Mammary epithelial cell (primary cell): ENCODE measurements at regions of chr12 and their contacts with region 1.

Region 1: GRCh38 chr12:120580787-120581723 is at the start of gene POP5:
- DNase-seq: peak; percentile 97
- H3K4me3 ChIP-seq: peak within 1 kb of the TSS; percentile 49 to 87 (median 81)
- H3K27ac ChIP-seq: peak within 1 kb of the TSS; percentile 10
- H3K4me1 ChIP-seq: peaks cover 16% of the 10 kb centered on the region
- H3K27me3 ChIP-seq: no peaks in the 10 kb centered on the region
- CTCF ChIP-seq: no peak
- total RNA-seq, gene POP5: 19.3 to 35.6 TPM

Region 2: DNA sequence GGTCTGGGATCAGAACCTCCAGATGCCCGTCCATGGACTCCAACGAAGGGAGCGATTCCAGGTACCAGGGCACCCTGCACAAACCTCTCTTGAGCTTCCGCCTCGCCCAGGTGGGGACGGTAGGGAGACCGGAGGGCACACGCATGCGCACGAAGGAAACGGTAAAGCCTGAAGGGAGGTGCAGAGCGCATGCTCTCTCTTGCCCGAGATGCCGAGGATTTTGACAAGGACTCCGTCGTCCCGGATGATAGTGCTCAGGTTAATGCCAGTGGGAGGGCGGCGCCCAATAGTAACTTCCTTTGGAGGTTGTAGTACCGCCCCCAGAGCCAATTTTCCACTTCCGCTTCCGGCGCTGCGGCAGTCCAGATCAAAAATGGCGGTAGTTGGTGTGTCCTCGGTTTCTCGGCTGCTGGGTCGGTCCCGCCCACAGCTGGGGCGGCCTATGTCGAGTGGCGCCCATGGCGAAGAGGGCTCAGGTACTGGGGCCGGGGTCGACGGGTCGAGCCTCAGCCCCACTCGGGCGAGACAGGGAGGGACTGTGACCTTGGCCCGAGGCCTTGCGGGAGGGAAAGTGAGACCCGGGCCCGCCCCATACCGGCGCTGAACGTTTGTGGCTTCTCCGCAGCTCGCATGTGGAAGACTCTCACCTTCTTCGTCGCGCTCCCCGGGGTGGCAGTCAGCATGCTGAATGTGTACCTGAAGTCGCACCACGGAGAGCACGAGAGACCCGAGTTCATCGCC is 143.1 kb before region 1 on chr12 and contains the start of gene COX6A1:
- CTCF ChIA-PET with region 1: no interaction called
- dilution Hi-C with region 1: no loop called
- in situ Hi-C with region 1: no loop called
- intact Hi-C with region 1: loop called (anchors 5 kb)
- DNase-seq: peak; percentile 98
- H3K4me3 ChIP-seq: peak within 1 kb of the TSS; percentile 47 to 99 (median 82)
- H3K27ac ChIP-seq: peak within 1 kb of the TSS; percentile 61
- H3K4me1 ChIP-seq: peaks cover 14% of the 10 kb centered on the region
- H3K27me3 ChIP-seq: no peaks in the 10 kb centered on the region
- CTCF ChIP-seq: peak in 1 of 2 donors; percentile 21
- total RNA-seq, gene COX6A1: 306 to 422 TPM

Region 3: GRCh38 chr12:120620624-120621023 is 39.6 kb after region 1 on chr12:
- CTCF ChIA-PET with region 1: no interaction called
- dilution Hi-C with region 1: no loop called
- in situ Hi-C with region 1: no loop called
- intact Hi-C with region 1: loop called (anchors 1 kb)
- DNase-seq: peak; percentile 89
- H3K4me3 ChIP-seq: no peak overlapping the region
- H3K27ac ChIP-seq: no peak overlapping the region
- H3K4me1 ChIP-seq: peaks cover 14% of the 10 kb centered on the region
- H3K27me3 ChIP-seq: no peaks in the 10 kb centered on the region
- CTCF ChIP-seq: no peak

Region 4: DNA sequence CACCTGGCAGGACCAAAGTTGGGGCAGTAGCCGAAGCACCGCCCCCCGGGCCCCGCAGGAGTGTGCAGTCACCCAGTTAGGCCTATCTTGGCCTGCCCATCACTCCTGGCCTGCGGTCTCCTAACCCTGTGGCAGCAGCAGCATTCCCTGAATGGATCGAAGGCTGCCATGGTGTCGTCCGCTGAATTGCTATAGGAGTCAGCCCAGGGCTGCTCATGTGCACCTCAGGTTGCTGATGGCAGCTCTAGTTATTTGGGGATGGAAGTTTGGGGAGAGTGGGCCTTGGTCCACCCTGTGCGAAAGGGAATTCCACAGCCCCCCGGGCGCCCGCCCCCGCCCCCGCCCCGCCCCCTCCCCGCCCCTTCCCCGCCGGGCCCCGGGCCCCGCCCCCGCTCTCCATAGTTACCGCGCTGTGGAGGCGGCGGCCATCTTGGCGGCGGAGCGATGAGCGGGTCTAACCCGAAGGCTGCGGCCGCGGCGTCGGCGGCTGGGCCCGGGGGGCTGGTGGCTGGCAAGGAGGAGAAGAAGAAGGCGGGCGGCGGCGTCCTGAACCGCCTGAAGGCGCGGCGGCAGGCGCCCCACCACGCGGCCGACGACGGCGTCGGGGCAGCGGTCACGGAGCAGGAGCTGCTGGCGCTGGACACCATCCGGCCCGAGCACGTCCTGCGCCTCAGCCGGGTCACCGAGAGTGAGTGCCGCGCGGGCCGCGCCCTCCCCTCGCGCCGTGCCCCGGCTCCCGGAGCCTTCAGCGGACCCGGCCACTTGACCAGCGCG is 129.2 kb after region 1 on chr12 and contains the start of gene UNC119B:
- CTCF ChIA-PET with region 1: no interaction called
- dilution Hi-C with region 1: loop called (anchors 5 kb)
- in situ Hi-C with region 1: loop called (anchors 5 to 10 kb)
- intact Hi-C with region 1: no loop called
- DNase-seq: peak; percentile 50
- H3K4me3 ChIP-seq: peak within 1 kb of the TSS; percentile 81 to 97 (median 93)
- H3K27ac ChIP-seq: peak within 1 kb of the TSS; percentile 84
- H3K4me1 ChIP-seq: peaks cover 15% of the 10 kb centered on the region
- H3K27me3 ChIP-seq: peaks cover 1% of the 10 kb centered on the region
- CTCF ChIP-seq: no peak
- total RNA-seq, gene UNC119B: 28.0 to 33.3 TPM

Region 5: DNA sequence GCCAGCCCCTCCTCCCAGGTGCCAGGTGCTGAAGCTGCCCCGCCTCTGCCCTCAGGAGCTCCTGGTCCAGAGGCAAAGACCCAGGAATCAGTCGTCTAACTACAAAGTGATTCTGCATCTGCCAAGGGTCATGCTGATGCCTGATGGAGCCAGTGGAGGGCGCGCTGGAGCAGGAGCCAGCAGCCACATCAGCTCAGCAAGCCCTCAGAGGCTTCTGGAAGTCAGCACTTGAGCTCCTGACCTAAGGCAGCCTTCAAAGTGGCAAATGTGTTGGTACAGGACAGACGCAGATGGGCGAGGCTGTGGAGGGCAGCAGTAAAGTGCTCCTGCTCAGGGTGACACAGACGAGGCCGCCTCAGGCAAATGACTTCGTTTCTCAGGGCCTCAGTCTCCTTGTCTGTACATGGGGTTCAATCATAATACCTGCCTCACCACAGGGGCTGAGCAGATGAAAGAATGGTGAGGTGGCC is 424.3 kb after region 1 on chr12:
- CTCF ChIA-PET with region 1: no interaction called
- dilution Hi-C with region 1: no loop called
- in situ Hi-C with region 1: no loop called
- intact Hi-C with region 1: loop called (anchors 1 kb)
- DNase-seq: peak; percentile 32
- H3K4me3 ChIP-seq: no peak overlapping the region
- H3K27ac ChIP-seq: no peak overlapping the region
- H3K4me1 ChIP-seq: no peaks in the 10 kb centered on the region
- H3K27me3 ChIP-seq: no peaks in the 10 kb centered on the region
- CTCF ChIP-seq: peak; percentile 67 to 78